ENCODE measurements at regions of chr19 and their contacts with region 1.

Region 1: GRCh38 chr19:4576016-4576933 is 16.8 kb upstream of the SEMA6B start:
- DNase-seq: peak; percentile 20 to 75 (median 56)
- ATAC-seq: peak; percentile 67
- H3K4me3 ChIP-seq: no peak overlapping the region
- H3K4me3 Mint-ChIP-seq: no peak overlapping the region
- H3K27ac ChIP-seq: no peak overlapping the region
- H3K27ac Mint-ChIP-seq: peak overlapping the region in 1 of 9 donors; percentile 41
- H3K4me1 ChIP-seq: no peaks in the 10 kb centered on the region
- H3K4me1 Mint-ChIP-seq: peaks cover 0 to 3% (median 0%) of the 10 kb centered on the region in 7 donors
- H3K27me3 ChIP-seq: no peaks in the 10 kb centered on the region
- H3K27me3 Mint-ChIP-seq: peaks cover 29 to 56% (median 45%) of the 10 kb centered on the region in 5 donors

Region 2: GRCh38 chr19:4633140-4633967 is 57.1 kb after region 1 on chr19:
- CTCF ChIA-PET with region 1: interaction called, 29 read pairs
- POLR2A ChIA-PET with region 1: interaction called, 4 read pairs
- intact Hi-C with region 1: loop called (anchors 1 kb)
- DNase-seq: peak in 6 of 9 donors; percentile 21 to 50 (median 32)
- ATAC-seq: peak; percentile 87
- H3K4me3 ChIP-seq: no peak overlapping the region
- H3K4me3 Mint-ChIP-seq: peak overlapping the region in 4 of 10 donors; percentile 27 to 48 (median 39)
- H3K27ac ChIP-seq: no peak overlapping the region
- H3K27ac Mint-ChIP-seq: peak overlapping the region in 4 of 9 donors; percentile 39 to 83 (median 72)
- H3K4me1 ChIP-seq: peaks cover 12 to 14% of the 10 kb centered on the region in 2 donors
- H3K4me1 Mint-ChIP-seq: peaks cover 11 to 22% (median 14%) of the 10 kb centered on the region in 7 donors
- H3K27me3 ChIP-seq: no peaks in the 10 kb centered on the region
- H3K27me3 Mint-ChIP-seq: peaks cover 0 to 6% (median 0%) of the 10 kb centered on the region in 5 donors

Region 3: DNA sequence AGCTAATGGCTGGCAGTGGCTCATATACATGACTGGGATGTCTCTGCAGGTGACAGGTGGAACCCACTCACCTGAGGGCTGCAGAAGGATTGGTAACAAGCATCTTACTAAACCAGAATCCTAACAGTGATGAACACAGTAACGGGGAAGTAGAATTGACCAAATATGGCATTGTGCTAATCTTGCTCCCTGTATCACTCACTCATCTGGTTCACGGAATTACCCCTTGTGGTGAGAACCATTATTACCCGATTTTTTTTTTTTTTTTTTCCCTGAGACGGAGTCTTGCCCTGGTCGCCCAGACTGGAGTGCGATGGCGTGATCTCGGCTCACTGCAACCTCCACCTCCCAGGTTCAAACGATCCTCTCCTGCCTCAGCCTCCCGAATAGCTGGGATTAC is 694.9 kb after region 1 on chr19:
- CTCF ChIA-PET with region 1: no interaction called
- POLR2A ChIA-PET with region 1: no interaction called
- intact Hi-C with region 1: no loop called
- DNase-seq: no peak
- ATAC-seq: no peak
- H3K4me3 ChIP-seq: no peak overlapping the region
- H3K4me3 Mint-ChIP-seq: no peak overlapping the region
- H3K27ac ChIP-seq: no peak overlapping the region
- H3K27ac Mint-ChIP-seq: no peak overlapping the region
- H3K4me1 ChIP-seq: no peaks in the 10 kb centered on the region
- H3K4me1 Mint-ChIP-seq: no peaks in the 10 kb centered on the region
- H3K27me3 ChIP-seq: no peaks in the 10 kb centered on the region
- H3K27me3 Mint-ChIP-seq: peaks cover 0 to 3% (median 0%) of the 10 kb centered on the region in 5 donors